Mammary epithelial cell (primary cell): ENCODE measurements at regions of chr14 and their contacts with region 1.

Region 1: GRCh38 chr14:34539407-34540180 is at the start of gene EAPP:
- DNase-seq: peak; percentile 96
- H3K4me3 ChIP-seq: peak within 1 kb of the TSS; percentile 76 to 100 (median 97)
- H3K27ac ChIP-seq: peak within 1 kb of the TSS; percentile 99
- H3K4me1 ChIP-seq: peaks cover 14% of the 10 kb centered on the region
- H3K27me3 ChIP-seq: no peaks in the 10 kb centered on the region
- CTCF ChIP-seq: no peak
- total RNA-seq, gene EAPP: 26.7 to 30.7 TPM

Region 2: GRCh38 chr14:34374980-34375740 is 164.4 kb before region 1 on chr14:
- CTCF ChIA-PET with region 1: no interaction called
- dilution Hi-C with region 1: loop called (anchors 10 kb)
- in situ Hi-C with region 1: no loop called
- intact Hi-C with region 1: no loop called
- DNase-seq: peak; percentile 84
- H3K4me3 ChIP-seq: peak overlapping the region in 1 of 3 experiments; percentile 2
- H3K27ac ChIP-seq: peak overlapping the region; percentile 73
- H3K4me1 ChIP-seq: peaks cover 22% of the 10 kb centered on the region
- H3K27me3 ChIP-seq: no peaks in the 10 kb centered on the region
- CTCF ChIP-seq: no peak

Region 3: DNA sequence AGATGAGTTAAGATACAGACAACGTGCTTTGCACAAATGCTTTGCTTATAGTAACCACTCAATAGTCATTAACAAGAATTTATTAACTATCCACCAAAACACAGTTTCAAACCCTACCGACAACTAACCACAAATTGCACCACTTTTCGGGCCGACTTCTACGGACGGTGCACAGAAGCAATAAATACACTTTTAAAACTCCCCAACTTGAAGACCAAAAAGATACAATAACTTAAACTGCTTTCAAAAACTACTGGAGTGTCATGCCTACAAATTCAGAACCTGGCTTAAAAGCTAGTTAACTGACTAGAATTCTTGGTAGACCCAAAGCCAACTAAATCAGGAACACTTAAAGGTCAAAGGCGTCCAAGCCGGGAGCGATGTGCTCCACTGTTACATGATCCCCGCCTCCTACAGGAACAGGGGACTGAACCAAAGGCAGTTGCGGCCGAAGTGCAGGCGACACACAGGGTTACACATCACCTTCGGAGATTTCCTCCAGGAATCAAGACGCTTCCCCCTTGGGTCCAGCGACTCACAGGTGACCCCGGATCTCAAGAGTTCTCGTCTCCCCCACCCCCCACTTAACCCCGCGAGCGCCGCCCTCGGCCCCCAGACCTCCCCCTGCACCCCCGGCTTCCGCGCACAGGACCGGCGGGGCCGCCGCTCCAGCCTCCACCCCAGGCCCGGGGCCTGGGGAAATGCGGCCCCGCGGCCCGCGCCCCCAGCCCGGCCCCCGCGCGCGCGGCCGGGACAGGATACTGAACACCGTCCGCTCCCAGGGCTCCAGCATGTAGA is 78.1 kb before region 1 on chr14:
- CTCF ChIA-PET with region 1: no interaction called
- dilution Hi-C with region 1: loop called (anchors 10 kb)
- in situ Hi-C with region 1: no loop called
- intact Hi-C with region 1: loop called (anchors 5 kb)
- DNase-seq: peak; percentile 42
- H3K4me3 ChIP-seq: peak overlapping the region; percentile 72 to 77 (median 76)
- H3K27ac ChIP-seq: peak overlapping the region; percentile 77
- H3K4me1 ChIP-seq: peaks cover 8% of the 10 kb centered on the region
- H3K27me3 ChIP-seq: no peaks in the 10 kb centered on the region
- CTCF ChIP-seq: no peak

Region 4: DNA sequence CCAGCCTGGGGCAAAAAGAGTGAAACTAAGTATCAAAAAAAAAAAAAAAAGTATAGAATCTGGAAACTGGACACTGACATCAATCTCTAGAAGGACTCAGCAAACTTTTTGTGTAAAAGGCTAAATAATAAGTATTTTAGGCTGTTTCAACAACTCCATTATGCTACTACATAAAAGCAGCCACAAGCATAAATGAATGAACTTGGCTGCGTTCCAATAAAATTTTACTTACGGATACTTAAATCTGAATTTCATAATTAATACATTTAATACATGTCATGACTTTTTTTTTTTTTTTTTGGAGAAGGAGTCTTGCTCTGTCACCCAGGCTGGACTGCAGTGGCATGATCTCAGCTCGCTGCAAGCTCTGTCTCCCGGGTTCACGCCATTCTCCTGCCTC is 25.2 kb after region 1 on chr14:
- CTCF ChIA-PET with region 1: no interaction called
- dilution Hi-C with region 1: no loop called
- in situ Hi-C with region 1: no loop called
- intact Hi-C with region 1: no loop called
- DNase-seq: no peak
- H3K4me3 ChIP-seq: no peak overlapping the region
- H3K27ac ChIP-seq: no peak overlapping the region
- H3K4me1 ChIP-seq: no peaks in the 10 kb centered on the region
- H3K27me3 ChIP-seq: no peaks in the 10 kb centered on the region
- CTCF ChIP-seq: no peak

Region 5: DNA sequence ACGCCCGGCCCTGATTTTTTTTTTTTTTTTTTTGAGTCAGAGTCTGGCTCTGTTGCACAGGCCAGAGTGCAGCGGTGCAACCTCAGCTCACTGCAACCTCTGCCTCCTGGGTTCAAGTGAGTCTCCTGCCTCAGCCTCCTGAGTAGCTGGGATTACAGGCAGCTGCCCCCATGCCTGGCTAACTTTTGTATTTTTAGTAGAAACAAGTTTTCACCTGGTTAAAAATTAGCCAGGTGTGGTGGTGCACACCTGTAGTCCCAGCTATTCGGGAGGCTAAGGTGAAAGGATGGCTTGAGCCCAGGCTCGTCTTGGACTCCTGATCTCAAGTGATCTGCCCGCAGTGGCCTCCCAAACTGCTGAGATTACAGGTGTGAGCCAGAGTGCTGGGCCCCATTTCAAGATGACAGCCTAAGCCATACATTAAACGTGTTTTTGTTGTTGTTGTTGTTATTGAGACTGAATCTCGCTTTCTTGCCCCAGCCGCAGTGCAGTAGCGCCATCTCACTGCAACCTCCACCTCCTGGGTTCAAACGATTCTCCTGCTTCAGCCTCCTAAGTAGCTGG is 42.6 kb after region 1 on chr14:
- CTCF ChIA-PET with region 1: no interaction called
- dilution Hi-C with region 1: no loop called
- in situ Hi-C with region 1: no loop called
- intact Hi-C with region 1: no loop called
- DNase-seq: no peak
- H3K4me3 ChIP-seq: no peak overlapping the region
- H3K27ac ChIP-seq: no peak overlapping the region
- H3K4me1 ChIP-seq: no peaks in the 10 kb centered on the region
- H3K27me3 ChIP-seq: no peaks in the 10 kb centered on the region
- CTCF ChIP-seq: no peak